ENCODE measurements at regions of chr12 and their contacts with region 1.

Region 1: DNA sequence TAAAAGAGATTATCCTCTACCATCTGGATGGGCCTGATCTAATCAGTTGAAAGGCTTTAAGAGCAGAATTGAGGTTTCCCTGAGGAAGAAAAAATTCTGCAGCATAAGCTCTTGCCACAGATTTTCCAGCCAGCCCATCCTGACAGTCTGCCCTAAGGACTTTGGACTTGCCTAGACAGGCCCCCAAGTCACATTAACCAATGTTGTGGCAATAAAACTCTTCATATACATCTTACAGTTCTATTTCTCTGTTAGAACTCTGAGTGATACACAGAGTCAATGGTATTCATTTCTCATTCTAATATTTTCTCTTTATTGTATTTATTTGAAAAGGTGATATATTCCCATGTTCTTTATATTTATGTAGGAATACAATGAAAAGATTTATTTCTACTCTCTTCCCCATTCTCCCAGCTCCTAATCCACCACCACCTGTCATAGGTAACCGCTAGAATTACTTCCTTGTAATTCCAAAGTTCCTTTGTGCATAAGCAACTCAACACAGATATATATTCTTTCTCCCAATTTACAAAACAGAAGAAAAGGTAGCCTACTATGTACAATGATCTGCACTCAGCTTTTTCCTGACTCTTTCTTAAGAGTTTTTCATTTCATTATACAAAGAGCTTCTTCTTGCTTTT is 182.1 kb downstream of the CAPZA3 start:
- DNase-seq: no peak
- H3K4me3 ChIP-seq: no peak overlapping the region
- H3K27ac ChIP-seq: no peak overlapping the region
- H3K4me1 ChIP-seq: no peaks in the 10 kb centered on the region
- H3K27me3 ChIP-seq: no peaks in the 10 kb centered on the region
- CTCF ChIP-seq: no peak
- EP300 ChIP-seq: no peak
- POLR2A ChIP-seq: no peak

Region 2: DNA sequence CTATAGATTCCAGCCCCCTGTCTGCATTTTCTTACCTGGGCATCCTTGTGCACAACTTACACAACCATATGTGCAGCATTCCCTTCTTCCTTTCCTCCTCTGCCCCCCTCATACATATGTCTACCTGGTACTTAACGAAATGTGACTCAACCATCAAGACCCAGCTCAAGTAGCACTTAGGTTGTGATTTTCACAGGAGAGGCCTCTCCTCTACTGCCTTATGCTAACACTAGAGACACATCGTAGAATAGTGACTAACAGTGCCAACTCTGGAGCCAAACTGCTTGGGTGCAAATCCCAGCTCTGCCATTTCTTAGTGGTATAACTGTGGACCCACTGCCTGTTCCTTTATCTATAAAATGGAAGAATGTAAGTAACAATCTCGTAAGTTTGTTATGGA is 185.5 kb after region 1 on chr12:
- intact Hi-C with region 1: loop called (anchors 10 kb)
- DNase-seq: no peak
- H3K4me3 ChIP-seq: no peak overlapping the region
- H3K27ac ChIP-seq: no peak overlapping the region
- H3K4me1 ChIP-seq: no peaks in the 10 kb centered on the region
- H3K27me3 ChIP-seq: no peaks in the 10 kb centered on the region
- CTCF ChIP-seq: no peak
- EP300 ChIP-seq: no peak
- POLR2A ChIP-seq: no peak